Activated CD4-positive, alpha-beta memory T cell treated with anti-CD3 and anti-CD28 coated beads for 36 hours (primary cell): ENCODE measurements at regions of chr6 and their contacts with region 1.

Region 1: DNA sequence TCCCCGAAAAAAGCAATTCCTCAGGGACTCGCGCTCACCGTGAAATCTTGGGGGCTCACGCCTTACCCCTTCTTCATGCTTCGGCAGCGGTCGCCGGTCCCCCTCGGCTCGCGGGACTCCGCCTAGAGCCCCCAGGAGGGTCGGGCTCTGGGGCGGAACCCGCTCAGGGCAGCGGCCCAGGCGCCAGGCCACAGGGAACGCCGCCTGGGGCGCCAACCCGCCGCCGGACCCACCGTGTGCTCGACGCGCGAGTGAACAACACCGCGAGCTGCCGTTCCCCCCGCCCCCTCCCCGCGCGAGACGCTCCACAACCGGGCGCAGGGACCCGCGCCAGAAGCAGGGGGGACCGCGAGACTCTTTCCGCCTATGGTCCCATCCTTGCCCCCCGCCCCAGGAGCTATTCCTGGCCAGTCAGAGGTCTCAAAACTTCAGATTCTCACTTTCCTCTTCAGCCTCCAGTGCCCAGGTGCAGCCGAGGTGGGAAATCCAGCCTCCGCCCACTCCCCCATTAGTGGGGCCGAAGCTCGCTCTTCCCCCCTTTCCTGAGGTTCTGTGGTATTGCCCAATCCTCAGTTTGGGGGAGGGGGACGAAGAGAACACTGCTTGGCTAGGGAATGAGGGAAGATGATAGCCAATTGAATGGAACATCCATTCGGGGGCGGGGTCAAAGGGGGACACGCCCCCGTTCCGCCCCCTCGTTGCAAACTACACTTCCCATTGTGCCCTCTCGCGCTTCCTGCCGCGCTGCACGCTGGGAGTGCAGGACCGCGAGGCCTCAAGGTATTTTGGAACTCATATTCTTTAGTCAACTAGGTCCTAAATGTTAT is at the start of gene WASF1:
- DNase-seq: peak; percentile 94
- H3K4me3 Mint-ChIP-seq: peak within 1 kb of the TSS; percentile 85
- H3K27ac Mint-ChIP-seq: no peak within 1 kb of the TSS
- H3K4me1 Mint-ChIP-seq: peaks cover 5% of the 10 kb centered on the region
- H3K27me3 Mint-ChIP-seq: peaks cover 10% of the 10 kb centered on the region
- total RNA-seq, gene WASF1: 1.9 to 2.6 TPM

Region 2: GRCh38 chr6:110233770-110234374 is 54.3 kb after region 1 on chr6:
- CTCF ChIA-PET with region 1: interaction called, 3 read pairs
- POLR2A ChIA-PET with region 1: no interaction called
- intact Hi-C with region 1: loop called (anchors 2 kb)
- DNase-seq: no peak
- H3K4me3 Mint-ChIP-seq: no peak overlapping the region
- H3K27ac Mint-ChIP-seq: no peak overlapping the region
- H3K4me1 Mint-ChIP-seq: peaks cover 12% of the 10 kb centered on the region
- H3K27me3 Mint-ChIP-seq: no peaks in the 10 kb centered on the region